WTC11 (cell line): ENCODE measurements at regions of chr9 and their contacts with region 1.

Region 1: GRCh38 chr9:34637356-34638137 is at the start of gene SIGMAR1:
- DNase-seq: peak; percentile 95
- ATAC-seq: peak; percentile 89
- H3K4me3 Mint-ChIP-seq: peak within 1 kb of the TSS; percentile 83
- H3K27ac Mint-ChIP-seq: peak within 1 kb of the TSS; percentile 3
- H3K4me1 Mint-ChIP-seq: peaks cover 22% of the 10 kb centered on the region
- H3K27me3 Mint-ChIP-seq: peaks cover 11% of the 10 kb centered on the region
- CTCF ChIP-seq: no peak
- total RNA-seq, gene SIGMAR1: 108 to 116 TPM (median 109 TPM) in 3 replicates

Region 2: GRCh38 chr9:34451545-34451944 is 186.0 kb before region 1 on chr9:
- CTCF ChIA-PET with region 1: no interaction called
- POLR2A ChIA-PET with region 1: no interaction called
- DNase-seq: no peak
- ATAC-seq: peak; percentile 18
- H3K4me3 Mint-ChIP-seq: no peak overlapping the region
- H3K27ac Mint-ChIP-seq: no peak overlapping the region
- H3K4me1 Mint-ChIP-seq: peaks cover 16% of the 10 kb centered on the region
- H3K27me3 Mint-ChIP-seq: peaks cover 5% of the 10 kb centered on the region
- CTCF ChIP-seq: no peak

Region 3: GRCh38 chr9:34611829-34612630 is 25.5 kb before region 1 on chr9 and contains the start of gene RPP25L:
- CTCF ChIA-PET with region 1: interaction called, 26 read pairs
- POLR2A ChIA-PET with region 1: interaction called, 3 read pairs
- DNase-seq: peak; percentile 83
- ATAC-seq: peak; percentile 86
- H3K4me3 Mint-ChIP-seq: peak within 1 kb of the TSS; percentile 82
- H3K27ac Mint-ChIP-seq: peak within 1 kb of the TSS; percentile 82
- H3K4me1 Mint-ChIP-seq: peaks cover 20% of the 10 kb centered on the region
- H3K27me3 Mint-ChIP-seq: peaks cover 11% of the 10 kb centered on the region
- CTCF ChIP-seq: no peak
- total RNA-seq, gene RPP25L: 24.5 to 35.9 TPM (median 31.4 TPM) in 3 replicates

Region 4: GRCh38 chr9:34620061-34620994 is 17.2 kb before region 1 on chr9 and contains the start of gene DCTN3:
- CTCF ChIA-PET with region 1: interaction called, 19 read pairs
- POLR2A ChIA-PET with region 1: interaction called, 7 read pairs
- DNase-seq: peak; percentile 88
- ATAC-seq: peak; percentile 92
- H3K4me3 Mint-ChIP-seq: peak within 1 kb of the TSS; percentile 86
- H3K27ac Mint-ChIP-seq: no peak within 1 kb of the TSS
- H3K4me1 Mint-ChIP-seq: peaks cover 10% of the 10 kb centered on the region
- H3K27me3 Mint-ChIP-seq: peaks cover 55% of the 10 kb centered on the region
- CTCF ChIP-seq: no peak
- total RNA-seq, gene DCTN3: 23.8 to 28.7 TPM (median 27.5 TPM) in 3 replicates

Region 5: GRCh38 chr9:34651876-34652601 is 14.5 kb after region 1 on chr9 and contains the start of gene IL11RA:
- CTCF ChIA-PET with region 1: interaction called, 94 read pairs
- POLR2A ChIA-PET with region 1: interaction called, 25 read pairs
- DNase-seq: peak; percentile 94
- ATAC-seq: peak; percentile 94
- H3K4me3 Mint-ChIP-seq: peak within 1 kb of the TSS; percentile 81
- H3K27ac Mint-ChIP-seq: peak within 1 kb of the TSS; percentile 94
- H3K4me1 Mint-ChIP-seq: peaks cover 37% of the 10 kb centered on the region
- H3K27me3 Mint-ChIP-seq: no peaks in the 10 kb centered on the region
- CTCF ChIP-seq: no peak
- total RNA-seq, gene IL11RA: 7.2 to 8.6 TPM (median 7.6 TPM) in 3 replicates

Region 6: GRCh38 chr9:34665381-34666250 is 28.1 kb after region 1 on chr9:
- CTCF ChIA-PET with region 1: interaction called, 39 read pairs
- POLR2A ChIA-PET with region 1: interaction called, 6 read pairs
- DNase-seq: peak; percentile 94
- ATAC-seq: peak; percentile 82
- H3K4me3 Mint-ChIP-seq: peak overlapping the region; percentile 94
- H3K27ac Mint-ChIP-seq: peak overlapping the region; percentile 97
- H3K4me1 Mint-ChIP-seq: peaks cover 9% of the 10 kb centered on the region
- H3K27me3 Mint-ChIP-seq: peaks cover 13% of the 10 kb centered on the region
- CTCF ChIP-seq: no peak